Caco-2 (cell line): ENCODE measurements at regions of chr1 and their contacts with region 1.

Region 1: DNA sequence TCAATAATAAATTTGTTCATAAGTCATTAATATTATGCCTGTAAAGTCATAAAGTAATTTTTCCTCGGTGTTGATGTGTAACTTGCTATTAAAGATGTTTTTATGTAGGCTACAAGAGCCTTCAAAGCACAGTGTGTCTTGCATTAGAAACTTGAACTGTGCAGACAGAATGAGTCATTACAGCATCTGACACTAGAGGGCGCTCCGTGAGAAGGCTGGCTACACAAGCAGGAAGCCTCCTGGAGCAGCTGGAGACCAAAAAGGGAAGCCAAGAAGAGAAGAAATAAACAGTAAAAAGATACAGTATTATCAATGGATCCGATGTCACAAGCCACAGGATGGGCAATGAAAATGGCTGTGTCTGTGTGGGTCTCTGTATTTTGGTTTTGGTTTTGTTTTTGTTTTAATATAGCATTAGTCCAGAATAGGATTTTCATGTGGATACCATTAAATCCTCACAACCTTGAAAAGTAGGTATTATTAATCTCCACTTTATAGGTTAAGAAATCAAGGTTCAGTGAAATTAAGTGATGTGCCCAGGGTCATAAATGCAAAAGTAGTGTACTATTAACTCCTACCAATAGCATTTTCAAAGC is 16.1 kb upstream of the LRRC8D start:
- DNase-seq: peak; percentile 76 to 80
- H3K4me3 ChIP-seq: no peak overlapping the region
- H3K4me3 Mint-ChIP-seq: no peak overlapping the region
- H3K27ac Mint-ChIP-seq: no peak overlapping the region
- H3K4me1 ChIP-seq: peaks cover 28% of the 10 kb centered on the region
- H3K4me1 Mint-ChIP-seq: peaks cover 8% of the 10 kb centered on the region
- H3K27me3 ChIP-seq: no peaks in the 10 kb centered on the region
- H3K27me3 Mint-ChIP-seq: no peaks in the 10 kb centered on the region
- CTCF ChIP-seq: peak; percentile 75 to 77

Region 2: DNA sequence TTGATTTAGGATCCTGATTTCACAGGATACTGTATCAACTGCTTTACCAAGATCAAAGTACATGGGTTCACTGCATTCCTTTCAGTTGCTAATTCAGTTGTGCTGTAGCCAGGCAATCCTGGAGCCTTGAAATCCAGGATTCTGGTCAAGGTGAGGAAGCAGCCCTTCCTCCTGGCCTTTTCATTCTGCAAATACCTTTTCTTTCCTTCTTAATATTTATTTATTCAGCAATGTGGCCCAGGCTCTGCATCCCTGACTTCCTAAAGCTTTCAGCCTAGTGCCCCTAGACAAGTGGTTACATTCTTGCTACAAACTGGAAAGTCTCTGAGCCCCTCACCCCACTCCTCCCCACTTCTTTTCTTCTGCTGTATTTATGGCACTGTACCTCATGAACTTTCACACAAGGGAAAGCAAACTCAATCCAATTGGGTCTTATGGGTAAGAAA is 32.3 kb after region 1 on chr1:
- CTCF ChIA-PET with region 1: interaction called, 3 read pairs
- POLR2A ChIA-PET with region 1: no interaction called
- intact Hi-C with region 1: loop called (anchors 1 kb)
- DNase-seq: peak in 1 of 2 experiments; percentile 39
- H3K4me3 ChIP-seq: no peak overlapping the region
- H3K4me3 Mint-ChIP-seq: peak overlapping the region; percentile 69
- H3K27ac Mint-ChIP-seq: peak overlapping the region; percentile 76
- H3K4me1 ChIP-seq: peaks cover 52% of the 10 kb centered on the region
- H3K4me1 Mint-ChIP-seq: peaks cover 42% of the 10 kb centered on the region
- H3K27me3 ChIP-seq: no peaks in the 10 kb centered on the region
- H3K27me3 Mint-ChIP-seq: no peaks in the 10 kb centered on the region
- CTCF ChIP-seq: no peak

Region 3: DNA sequence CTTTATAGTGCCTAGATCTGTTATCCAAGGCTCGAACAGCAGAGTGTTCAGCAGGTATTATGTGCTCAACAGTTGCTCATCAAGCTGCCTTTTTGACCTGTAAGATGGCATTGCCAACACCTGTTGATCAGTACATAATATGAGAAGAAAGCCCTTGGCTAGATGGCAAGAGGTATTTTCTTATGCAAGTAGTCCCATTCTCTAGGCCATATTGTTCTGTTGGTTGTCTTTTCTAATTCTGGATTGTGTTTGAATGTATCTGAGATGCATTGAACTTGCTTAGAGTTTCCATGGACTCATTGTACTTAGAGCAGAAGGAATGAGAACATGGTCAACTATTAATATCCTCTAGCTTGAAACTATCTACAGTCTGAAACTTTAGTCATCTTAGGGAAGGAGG is 73.5 kb after region 1 on chr1:
- CTCF ChIA-PET with region 1: interaction called, 12 read pairs
- POLR2A ChIA-PET with region 1: no interaction called
- intact Hi-C with region 1: no loop called
- DNase-seq: no peak
- H3K4me3 ChIP-seq: no peak overlapping the region
- H3K4me3 Mint-ChIP-seq: no peak overlapping the region
- H3K27ac Mint-ChIP-seq: no peak overlapping the region
- H3K4me1 ChIP-seq: no peaks in the 10 kb centered on the region
- H3K4me1 Mint-ChIP-seq: no peaks in the 10 kb centered on the region
- H3K27me3 ChIP-seq: no peaks in the 10 kb centered on the region
- H3K27me3 Mint-ChIP-seq: no peaks in the 10 kb centered on the region
- CTCF ChIP-seq: no peak

Region 4: GRCh38 chr1:89953072-89953626 is 148.4 kb after region 1 on chr1:
- CTCF ChIA-PET with region 1: interaction called, 4 read pairs
- POLR2A ChIA-PET with region 1: no interaction called
- intact Hi-C with region 1: loop called (anchors 1 kb)
- DNase-seq: peak; percentile 48 to 61
- H3K4me3 ChIP-seq: no peak overlapping the region
- H3K4me3 Mint-ChIP-seq: no peak overlapping the region
- H3K27ac Mint-ChIP-seq: no peak overlapping the region
- H3K4me1 ChIP-seq: peaks cover 52% of the 10 kb centered on the region
- H3K4me1 Mint-ChIP-seq: peaks cover 25% of the 10 kb centered on the region
- H3K27me3 ChIP-seq: no peaks in the 10 kb centered on the region
- H3K27me3 Mint-ChIP-seq: no peaks in the 10 kb centered on the region
- CTCF ChIP-seq: no peak

Region 5: GRCh38 chr1:89994805-89995597 is 190.3 kb after region 1 on chr1 and contains the start of gene ZNF326:
- CTCF ChIA-PET with region 1: no interaction called
- POLR2A ChIA-PET with region 1: no interaction called
- intact Hi-C with region 1: loop called (anchors 2 kb)
- DNase-seq: peak; percentile 97
- H3K4me3 ChIP-seq: peak within 1 kb of the TSS; percentile 82
- H3K4me3 Mint-ChIP-seq: peak within 1 kb of the TSS; percentile 80
- H3K27ac Mint-ChIP-seq: peak within 1 kb of the TSS; percentile 87
- H3K4me1 ChIP-seq: peaks cover 36% of the 10 kb centered on the region
- H3K4me1 Mint-ChIP-seq: peaks cover 23% of the 10 kb centered on the region
- H3K27me3 ChIP-seq: no peaks in the 10 kb centered on the region
- H3K27me3 Mint-ChIP-seq: no peaks in the 10 kb centered on the region
- CTCF ChIP-seq: no peak
- total RNA-seq, gene ZNF326: 31.7 and 32.3 TPM in 2 replicates